HEK293T (cell line): ENCODE measurements at regions of chr1 and their contacts with region 1.

Region 1: GRCh38 chr1:33349778-33350610 is 29.1 kb upstream of the A3GALT2 start:
- DNase-seq: peak; percentile 99

Region 2: DNA sequence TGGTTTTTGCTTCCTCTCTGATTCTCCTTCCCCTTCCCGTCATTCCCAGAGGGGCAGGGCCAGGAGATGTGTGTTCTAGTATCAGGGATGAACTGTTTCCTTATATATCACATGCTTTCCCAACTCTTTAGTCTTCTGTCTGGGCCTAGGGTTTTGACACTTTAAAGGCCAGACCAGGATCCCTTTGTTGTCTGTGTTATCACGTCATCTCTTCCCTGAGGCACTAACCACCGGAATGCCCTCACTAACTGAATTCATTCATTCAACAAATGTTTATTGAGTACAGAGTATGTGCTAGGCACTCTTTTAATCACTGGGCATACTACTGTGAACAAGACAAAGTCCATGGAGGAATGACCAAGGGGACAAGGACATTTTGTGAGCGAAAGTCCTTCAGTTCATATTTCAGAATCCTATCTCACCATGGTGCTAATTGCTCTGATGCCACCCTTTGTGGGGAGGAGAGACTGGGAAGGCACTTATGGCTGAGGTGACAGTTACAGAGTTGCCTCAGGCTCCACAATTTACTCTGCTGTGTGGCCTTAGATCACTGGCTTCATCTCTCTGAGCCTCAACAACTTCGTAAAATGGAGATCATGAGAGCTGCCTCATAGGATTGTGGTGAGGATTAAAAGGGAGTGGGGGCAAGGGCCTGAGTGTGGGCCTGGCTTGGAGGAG is 105.7 kb before region 1 on chr1:
- CTCF ChIA-PET with region 1: no interaction called
- POLR2A ChIA-PET with region 1: no interaction called
- DNase-seq: no peak

Region 3: GRCh38 chr1:33338440-33339211 is 11.4 kb before region 1 on chr1:
- CTCF ChIA-PET with region 1: no interaction called
- POLR2A ChIA-PET with region 1: interaction called, 15 read pairs
- DNase-seq: peak; percentile 61

Region 4: DNA sequence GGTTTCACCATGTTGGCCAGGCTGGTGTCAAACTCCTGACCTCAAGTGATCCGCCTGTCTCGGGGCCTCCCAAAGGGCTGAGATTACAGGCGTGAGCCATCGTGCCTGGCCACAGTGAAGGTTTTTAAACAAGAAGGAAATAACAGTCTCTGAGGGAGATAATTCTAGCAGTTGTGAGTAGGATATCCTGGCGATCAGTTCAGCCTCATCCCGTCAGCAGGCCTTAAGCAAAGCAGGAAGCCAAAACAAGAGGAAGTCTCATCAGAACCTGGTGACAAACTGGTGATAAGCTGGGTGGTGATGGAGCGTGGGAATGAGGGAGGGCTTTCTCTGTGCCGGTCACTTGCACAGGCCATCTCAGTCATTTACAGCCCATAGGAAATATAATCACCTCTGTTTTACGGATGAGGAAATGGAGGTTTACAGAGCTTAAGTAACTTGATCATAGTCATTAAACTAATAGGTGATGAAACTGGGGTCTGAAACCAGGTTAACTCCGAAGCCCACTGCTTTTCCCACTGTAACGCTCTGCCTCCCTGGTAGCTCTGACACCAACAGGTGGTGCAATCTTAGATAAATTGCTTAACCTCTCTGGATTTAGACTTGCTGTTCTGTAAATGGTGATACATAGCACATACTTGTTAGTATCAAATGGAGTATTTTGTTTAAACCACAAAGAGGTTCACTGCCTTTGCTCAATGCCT is 11.7 kb after region 1 on chr1:
- CTCF ChIA-PET with region 1: interaction called, 3 read pairs
- POLR2A ChIA-PET with region 1: interaction called, 17 read pairs
- DNase-seq: no peak